Ascending aorta (tissue), 2 donors: ENCODE measurements at regions of chr17 and their contacts with region 1.

Region 1: GRCh38 chr17:75319904-75320691 is 30.9 kb upstream of the SLC25A19 start:
- DNase-seq: no peak
- H3K4me3 ChIP-seq: no peak overlapping the region
- H3K27ac ChIP-seq: no peak overlapping the region
- H3K4me1 ChIP-seq: peaks cover 0 to 2% of the 10 kb centered on the region in 2 donors
- H3K27me3 ChIP-seq: no peaks in the 10 kb centered on the region
- CTCF ChIP-seq: no peak

Region 2: DNA sequence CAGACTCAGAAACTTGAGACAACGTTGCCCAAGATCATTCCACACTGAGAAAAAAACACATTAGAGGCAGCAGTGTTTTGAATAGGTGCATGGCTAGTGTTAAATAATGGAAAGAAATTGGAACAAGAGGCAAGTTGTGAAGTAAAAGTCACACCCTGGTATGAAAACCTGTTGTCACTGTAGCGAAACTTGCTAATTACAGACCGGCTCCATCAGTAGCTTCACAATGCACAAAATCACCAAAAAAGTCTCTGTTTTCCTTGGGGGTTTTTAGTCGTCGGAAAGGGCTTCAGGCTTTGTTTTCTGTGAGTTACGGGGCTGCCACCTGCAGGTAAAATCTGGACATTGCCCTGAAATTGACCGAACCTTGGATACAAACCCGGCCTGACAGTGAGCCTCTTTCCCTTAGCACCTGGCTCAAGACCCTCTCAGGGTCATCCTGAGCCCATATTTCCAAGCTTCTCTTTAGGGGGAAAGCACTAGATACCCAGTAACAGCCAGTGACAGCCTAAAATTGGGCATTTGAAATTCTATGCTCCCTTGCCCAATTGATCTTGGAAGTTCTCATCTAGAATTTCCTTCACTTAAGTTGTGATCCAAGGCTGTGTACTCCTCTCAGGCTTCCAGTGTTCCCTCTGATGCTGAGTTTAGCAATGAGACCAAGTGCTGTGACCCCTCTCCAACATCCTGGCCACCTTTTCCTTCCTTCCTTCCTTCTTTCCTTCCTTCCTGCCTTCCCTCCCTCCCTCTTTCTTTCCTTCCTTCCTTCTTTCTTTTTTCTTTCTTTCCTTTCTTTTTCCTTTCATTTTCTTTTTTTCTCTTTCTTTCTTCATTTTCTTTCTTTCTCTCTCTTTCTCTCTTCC is 92.6 kb after region 1 on chr17:
- intact Hi-C with region 1: loop called (anchors 1 kb)
- DNase-seq: peak in 1 of 2 donors; percentile 82
- H3K4me3 ChIP-seq: peak overlapping the region; percentile 11 to 35
- H3K27ac ChIP-seq: no peak overlapping the region
- H3K4me1 ChIP-seq: peaks cover 0 to 9% of the 10 kb centered on the region in 2 donors
- H3K27me3 ChIP-seq: no peaks in the 10 kb centered on the region
- CTCF ChIP-seq: peak; percentile 75 to 87 (median 79)

Region 3: GRCh38 chr17:75515496-75516254 is 195.6 kb after region 1 on chr17 and contains the start of gene CASKIN2:
- intact Hi-C with region 1: loop called (anchors 2 kb)
- DNase-seq: peak; percentile 77 to 96
- H3K4me3 ChIP-seq: peak within 1 kb of the TSS; percentile 78 to 82
- H3K27ac ChIP-seq: peak within 1 kb of the TSS; percentile 74 to 88
- H3K4me1 ChIP-seq: peaks cover 25 to 41% of the 10 kb centered on the region in 2 donors
- H3K27me3 ChIP-seq: no peaks in the 10 kb centered on the region
- CTCF ChIP-seq: peak; percentile 99 to 100 (median 99)
- total RNA-seq, gene CASKIN2: 112 TPM